Endothelial cell of umbilical vein (primary cell): ENCODE measurements at regions of chr1 and their contacts with region 1.

Region 1: GRCh38 chr1:35769759-35770446 is at the start of gene CLSPN:
- DNase-seq: peak; percentile 97
- H3K4me3 ChIP-seq: peak within 1 kb of the TSS; percentile 39 to 71 (median 51)
- H3K27ac ChIP-seq: peak within 1 kb of the TSS; percentile 76
- H3K4me1 ChIP-seq: peaks cover 6% of the 10 kb centered on the region
- H3K27me3 ChIP-seq: no peaks in the 10 kb centered on the region
- CTCF ChIP-seq: no peak
- POLR2A ChIP-seq: peak; percentile 74
- total RNA-seq, gene CLSPN: 33.2 and 39.5 TPM in 2 replicates

Region 2: DNA sequence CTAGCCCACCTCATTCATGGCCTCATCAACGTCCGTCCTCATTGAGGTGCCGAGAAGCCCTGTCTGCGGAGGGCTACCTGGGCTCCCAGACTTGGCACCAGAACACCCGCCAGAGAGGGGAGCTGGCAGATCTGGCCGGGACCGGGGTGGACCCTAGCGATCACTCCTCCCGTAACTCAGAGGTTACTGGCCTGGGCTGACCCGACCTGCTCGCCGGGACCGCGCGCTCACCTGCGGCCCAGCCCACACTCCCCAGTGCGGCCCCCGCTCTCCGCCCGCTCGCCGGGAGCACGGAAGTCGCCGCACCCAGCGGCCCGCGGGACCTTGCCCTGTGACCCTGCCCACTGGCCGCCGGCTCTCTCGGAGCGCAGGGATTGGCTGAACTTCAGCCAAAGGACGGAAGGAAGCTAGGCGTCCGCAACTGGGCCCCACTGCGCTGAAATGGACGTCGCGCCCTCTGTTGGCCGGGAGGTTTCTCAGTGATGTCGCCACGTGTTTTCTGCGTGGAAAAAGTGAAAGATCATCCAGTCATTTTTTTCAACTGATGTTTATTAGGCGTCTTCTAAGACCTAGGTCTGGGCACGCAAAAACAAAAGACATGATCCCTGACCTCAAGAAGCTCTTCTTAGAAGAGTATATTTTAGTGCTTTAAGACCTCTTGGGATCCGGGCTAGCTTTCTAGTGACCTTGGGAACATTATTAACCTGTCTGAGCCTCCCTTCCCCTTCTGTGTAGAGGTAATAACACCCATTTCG is 910.3 kb before region 1 on chr1 and contains the start of gene SMIM12:
- CTCF ChIA-PET with region 1: no interaction called
- POLR2A ChIA-PET with region 1: interaction called, 3 read pairs
- dilution Hi-C with region 1: no loop called
- intact Hi-C with region 1: loop called (anchors 1 kb)
- DNase-seq: peak; percentile 93
- H3K4me3 ChIP-seq: peak within 1 kb of the TSS; percentile 30 to 98 (median 74)
- H3K27ac ChIP-seq: peak within 1 kb of the TSS; percentile 81
- H3K4me1 ChIP-seq: peaks cover 8% of the 10 kb centered on the region
- H3K27me3 ChIP-seq: peaks cover 6 to 14% of the 10 kb centered on the region in 2 experiments
- CTCF ChIP-seq: peak; percentile 87 to 89
- POLR2A ChIP-seq: peak; percentile 86
- total RNA-seq, gene SMIM12: 54.7 and 66.2 TPM in 2 replicates

Region 3: GRCh38 chr1:35564037-35564883 is 205.6 kb before region 1 on chr1:
- CTCF ChIA-PET with region 1: interaction called, 41 read pairs
- POLR2A ChIA-PET with region 1: no interaction called
- dilution Hi-C with region 1: no loop called
- intact Hi-C with region 1: loop called (anchors 1 kb)
- DNase-seq: peak; percentile 70
- H3K4me3 ChIP-seq: no peak overlapping the region
- H3K27ac ChIP-seq: no peak overlapping the region
- H3K4me1 ChIP-seq: no peaks in the 10 kb centered on the region
- H3K27me3 ChIP-seq: no peaks in the 10 kb centered on the region
- CTCF ChIP-seq: peak; percentile 72 to 84
- POLR2A ChIP-seq: no peak

Region 4: DNA sequence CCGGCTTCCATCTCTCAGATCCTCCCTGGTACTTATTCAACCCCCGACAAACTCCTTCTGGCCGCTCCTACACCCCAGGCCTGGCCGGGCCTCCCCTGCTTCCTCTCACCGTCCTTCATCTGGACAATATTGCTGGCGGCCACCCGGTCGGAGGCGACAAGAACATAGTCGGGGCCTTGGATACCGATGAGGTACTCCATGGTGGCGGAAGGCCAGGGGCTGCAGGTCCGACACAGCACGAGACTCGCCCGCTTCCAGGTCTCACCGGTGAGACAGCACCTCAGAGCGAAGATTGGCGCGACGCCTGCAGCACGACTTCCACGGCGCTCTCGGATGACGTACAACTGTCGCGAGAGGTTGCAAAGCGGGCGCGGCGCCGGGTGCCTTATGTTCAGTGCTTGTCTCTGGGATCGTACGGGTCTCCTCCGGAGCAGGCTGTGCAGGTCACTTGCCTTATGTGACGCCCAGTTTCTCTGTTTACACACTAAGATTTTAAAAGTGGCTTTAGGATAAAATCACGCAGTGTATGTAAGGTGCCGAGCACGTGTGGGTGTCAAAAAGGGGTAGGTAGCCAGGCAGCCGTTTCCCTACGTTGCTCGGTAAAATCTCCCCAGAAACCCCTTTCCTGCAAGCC is 128.6 kb before region 1 on chr1 and contains the start of gene PSMB2:
- CTCF ChIA-PET with region 1: no interaction called
- POLR2A ChIA-PET with region 1: no interaction called
- dilution Hi-C with region 1: no loop called
- intact Hi-C with region 1: loop called (anchors 2 kb)
- DNase-seq: peak; percentile 96
- H3K4me3 ChIP-seq: peak within 1 kb of the TSS; percentile 64 to 100 (median 80)
- H3K27ac ChIP-seq: peak within 1 kb of the TSS; percentile 81
- H3K4me1 ChIP-seq: peaks cover 24% of the 10 kb centered on the region
- H3K27me3 ChIP-seq: peaks cover 13 to 20% of the 10 kb centered on the region in 2 experiments
- CTCF ChIP-seq: no peak
- POLR2A ChIP-seq: peak; percentile 94
- total RNA-seq, gene PSMB2: 93.6 and 101 TPM in 2 replicates

Region 5: DNA sequence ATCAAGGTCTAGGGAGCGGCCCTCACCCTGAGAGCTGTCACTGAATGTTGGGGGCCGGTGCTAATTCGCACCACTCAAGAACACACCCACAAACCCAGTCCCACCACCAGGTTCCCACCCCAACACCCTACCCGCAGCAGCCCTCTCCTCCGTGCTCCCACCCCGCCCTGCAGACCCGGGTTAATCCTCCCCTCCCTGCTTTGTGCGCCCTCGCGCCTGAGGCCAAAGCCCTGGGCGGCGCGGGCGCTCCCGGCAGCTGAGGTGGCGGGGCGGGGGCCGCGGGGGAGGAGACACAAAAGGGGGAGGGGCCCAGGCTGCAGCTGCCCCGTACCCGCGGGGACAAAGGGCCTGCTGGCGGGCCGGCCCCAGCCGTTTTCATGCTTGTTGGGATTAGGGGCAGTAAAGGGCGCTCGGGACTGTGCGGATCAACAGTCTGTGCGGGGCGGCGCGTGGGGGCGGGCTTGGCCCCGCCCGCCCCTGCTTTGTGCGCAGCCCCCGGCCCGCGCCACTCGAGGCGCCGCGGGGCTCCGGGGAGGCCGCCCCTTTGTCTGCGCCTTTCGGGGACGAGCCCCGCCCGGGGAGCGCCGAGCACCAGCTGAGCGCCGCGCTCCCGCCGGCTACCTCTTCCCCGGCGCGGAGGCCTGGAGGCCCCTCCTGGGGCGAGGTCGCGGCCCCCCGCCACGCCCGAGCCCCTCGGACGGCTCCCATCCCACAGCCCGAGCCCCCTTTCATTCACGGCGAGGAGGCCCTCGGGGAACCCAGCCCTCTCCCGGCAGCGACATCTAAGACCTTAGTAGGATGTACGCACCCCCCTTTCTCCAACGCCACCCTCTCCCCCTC is 62.1 kb before region 1 on chr1:
- CTCF ChIA-PET with region 1: no interaction called
- POLR2A ChIA-PET with region 1: no interaction called
- dilution Hi-C with region 1: no loop called
- intact Hi-C with region 1: no loop called
- DNase-seq: no peak
- H3K4me3 ChIP-seq: peak overlapping the region in 2 of 3 experiments; percentile 5 to 20
- H3K27ac ChIP-seq: no peak overlapping the region
- H3K4me1 ChIP-seq: peaks cover 6% of the 10 kb centered on the region
- H3K27me3 ChIP-seq: peaks cover 40 to 52% of the 10 kb centered on the region in 2 experiments
- CTCF ChIP-seq: no peak
- POLR2A ChIP-seq: no peak

Region 6: GRCh38 chr1:35726450-35727433 is 43.2 kb before region 1 on chr1:
- CTCF ChIA-PET with region 1: interaction called, 23 read pairs
- POLR2A ChIA-PET with region 1: interaction called, 3 read pairs
- dilution Hi-C with region 1: no loop called
- intact Hi-C with region 1: loop called (anchors 1 kb)
- DNase-seq: peak; percentile 66
- H3K4me3 ChIP-seq: no peak overlapping the region
- H3K27ac ChIP-seq: no peak overlapping the region
- H3K4me1 ChIP-seq: no peaks in the 10 kb centered on the region
- H3K27me3 ChIP-seq: no peaks in the 10 kb centered on the region
- CTCF ChIP-seq: peak; percentile 76 to 90
- POLR2A ChIP-seq: no peak

Region 7: DNA sequence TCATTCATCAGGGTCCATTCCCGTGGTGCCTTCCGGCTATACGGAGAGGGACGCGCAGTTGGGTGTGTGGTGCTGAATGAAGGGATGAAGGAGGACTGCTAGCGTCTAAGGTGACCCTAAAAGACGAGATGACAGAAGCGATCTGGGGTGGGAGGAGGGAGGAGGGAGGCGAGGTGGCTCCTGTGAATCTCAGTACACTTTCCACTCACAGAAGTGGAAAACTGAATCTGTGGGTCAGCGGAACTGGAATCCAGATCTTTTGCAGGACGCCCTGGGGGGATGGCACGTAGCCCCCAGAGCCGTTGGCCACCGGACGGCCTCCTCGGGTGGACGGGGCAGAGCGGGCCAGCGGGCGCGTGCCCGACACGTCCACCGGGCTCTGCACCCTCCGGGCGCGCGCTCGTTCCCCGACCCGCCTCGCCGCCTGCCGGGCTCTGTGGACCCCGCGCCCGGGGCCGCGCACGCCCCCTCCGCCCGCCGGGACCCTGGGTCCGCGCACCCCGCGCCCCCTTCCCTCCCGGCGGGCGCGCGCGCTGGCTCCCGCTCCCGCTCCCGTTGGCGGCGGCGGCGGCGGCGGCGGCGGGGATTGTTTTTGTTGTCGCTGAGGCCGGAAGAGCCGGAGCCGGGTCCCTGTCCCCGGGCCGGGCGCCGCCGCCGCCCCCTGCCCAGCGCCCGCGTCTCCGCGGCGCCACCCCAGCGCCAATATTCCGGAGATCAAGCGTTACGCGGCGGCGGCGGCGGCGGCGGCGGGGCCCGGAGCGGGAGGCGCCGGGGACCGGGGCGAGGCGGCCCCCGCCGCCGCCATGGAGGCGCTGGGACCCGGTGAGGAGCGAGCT is 37.9 kb after region 1 on chr1 and contains the start of gene AGO4:
- CTCF ChIA-PET with region 1: no interaction called
- POLR2A ChIA-PET with region 1: no interaction called
- dilution Hi-C with region 1: no loop called
- intact Hi-C with region 1: no loop called
- DNase-seq: peak; percentile 42
- H3K4me3 ChIP-seq: peak within 1 kb of the TSS; percentile 71 to 93 (median 85)
- H3K27ac ChIP-seq: peak within 1 kb of the TSS; percentile 65
- H3K4me1 ChIP-seq: peaks cover 12% of the 10 kb centered on the region
- H3K27me3 ChIP-seq: no peaks in the 10 kb centered on the region
- CTCF ChIP-seq: no peak
- POLR2A ChIP-seq: no peak
- total RNA-seq, gene AGO4: 16.2 and 19.8 TPM in 2 replicates

Region 8: DNA sequence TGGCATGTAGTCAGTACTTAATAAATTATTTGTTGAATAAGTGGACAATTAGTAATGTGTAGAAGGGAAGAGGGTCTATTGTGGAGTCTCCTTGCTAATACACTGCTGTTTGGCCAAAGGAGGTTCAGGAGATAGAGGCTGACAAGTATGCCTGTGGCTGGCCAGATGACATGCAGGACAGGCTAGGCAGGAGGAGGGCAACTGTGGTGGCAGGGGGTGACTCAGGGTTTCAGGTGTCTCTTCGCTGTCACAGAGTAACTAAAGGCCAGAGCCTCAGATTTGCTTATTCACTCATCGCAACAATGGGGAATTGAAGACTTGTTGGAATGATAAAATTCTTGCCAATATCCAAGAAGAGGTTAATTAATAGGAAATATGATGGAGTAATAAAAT is 487.5 kb after region 1 on chr1:
- CTCF ChIA-PET with region 1: no interaction called
- POLR2A ChIA-PET with region 1: no interaction called
- dilution Hi-C with region 1: no loop called
- intact Hi-C with region 1: no loop called
- DNase-seq: no peak
- H3K4me3 ChIP-seq: no peak overlapping the region
- H3K27ac ChIP-seq: no peak overlapping the region
- H3K4me1 ChIP-seq: no peaks in the 10 kb centered on the region
- H3K27me3 ChIP-seq: no peaks in the 10 kb centered on the region
- CTCF ChIP-seq: no peak
- POLR2A ChIP-seq: no peak